Naive thymus-derived CD4-positive, alpha-beta T cell (primary cell): ENCODE measurements at regions of chr1 and their contacts with region 1.

Region 1: DNA sequence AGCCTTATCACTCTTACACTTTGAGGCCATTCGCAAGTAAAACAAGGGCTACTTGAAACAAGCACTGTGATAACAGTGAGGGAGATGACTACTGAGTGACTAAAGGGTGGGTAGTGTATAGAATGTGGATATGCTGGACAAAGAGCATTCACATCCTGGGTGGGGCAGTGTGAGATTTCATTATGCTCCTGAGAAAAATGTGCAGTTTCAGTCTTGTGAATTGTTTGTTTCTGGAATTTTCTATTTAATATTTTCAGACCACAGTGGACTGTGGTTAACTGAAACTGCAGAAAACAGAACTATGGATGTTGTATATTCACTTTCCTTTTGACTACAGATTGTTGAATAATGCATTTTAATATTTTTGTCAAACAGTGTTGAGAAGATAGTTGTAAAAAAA is 25.1 kb upstream of the B3GALT2 start:
- DNase-seq: no peak
- ATAC-seq: no peak
- H3K4me3 ChIP-seq: no peak overlapping the region
- H3K4me3 Mint-ChIP-seq: no peak overlapping the region
- H3K27ac ChIP-seq: no peak overlapping the region
- H3K27ac Mint-ChIP-seq: peak overlapping the region in 4 of 9 donors; percentile 7 to 80 (median 32)
- H3K4me1 ChIP-seq: no peaks in the 10 kb centered on the region
- H3K4me1 Mint-ChIP-seq: peaks cover 13 to 36% (median 26%) of the 10 kb centered on the region in 7 donors
- H3K27me3 ChIP-seq: no peaks in the 10 kb centered on the region
- H3K27me3 Mint-ChIP-seq: no peaks in the 10 kb centered on the region

Region 2: GRCh38 chr1:193201021-193201420 is 10.5 kb before region 1 on chr1:
- CTCF ChIA-PET with region 1: no interaction called
- POLR2A ChIA-PET with region 1: no interaction called
- intact Hi-C with region 1: loop called in 1 of 2 experiments (anchors 2 kb)
- DNase-seq: no peak
- ATAC-seq: no peak
- H3K4me3 ChIP-seq: no peak overlapping the region
- H3K4me3 Mint-ChIP-seq: peak overlapping the region in 1 of 10 donors; percentile 33
- H3K27ac ChIP-seq: no peak overlapping the region
- H3K27ac Mint-ChIP-seq: peak overlapping the region in 1 of 9 donors; percentile 67
- H3K4me1 ChIP-seq: no peaks in the 10 kb centered on the region
- H3K4me1 Mint-ChIP-seq: peaks cover 17 to 52% (median 28%) of the 10 kb centered on the region in 7 donors
- H3K27me3 ChIP-seq: no peaks in the 10 kb centered on the region
- H3K27me3 Mint-ChIP-seq: no peaks in the 10 kb centered on the region

Region 3: GRCh38 chr1:193241132-193241827 is 29.7 kb after region 1 on chr1:
- CTCF ChIA-PET with region 1: no interaction called
- POLR2A ChIA-PET with region 1: no interaction called
- intact Hi-C with region 1: loop called in 1 of 2 experiments (anchors 5 kb)
- DNase-seq: no peak
- ATAC-seq: peak; percentile 14
- H3K4me3 ChIP-seq: no peak overlapping the region
- H3K4me3 Mint-ChIP-seq: peak overlapping the region in 1 of 10 donors; percentile 66
- H3K27ac ChIP-seq: no peak overlapping the region
- H3K27ac Mint-ChIP-seq: peak overlapping the region in 7 of 9 donors; percentile 7 to 84 (median 39)
- H3K4me1 ChIP-seq: peaks cover 0 to 8% of the 10 kb centered on the region in 2 donors
- H3K4me1 Mint-ChIP-seq: peaks cover 9 to 41% (median 33%) of the 10 kb centered on the region in 7 donors
- H3K27me3 ChIP-seq: no peaks in the 10 kb centered on the region
- H3K27me3 Mint-ChIP-seq: no peaks in the 10 kb centered on the region